ENCODE measurements at regions of chr18 and their contacts with region 1.

Region 1: GRCh38 chr18:58639751-58640427 is 11.0 kb upstream of the ALPK2 start:
- DNase-seq: no peak
- ATAC-seq: no peak
- H3K4me3 ChIP-seq: no peak overlapping the region
- H3K27ac ChIP-seq: peak overlapping the region in 1 of 4 donors; percentile 38
- H3K4me1 ChIP-seq: peaks cover 27 to 53% of the 10 kb centered on the region in 2 donors
- H3K27me3 ChIP-seq: no peaks in the 10 kb centered on the region
- CTCF ChIP-seq: no peak
- POLR2A ChIP-seq: no peak

Region 2: DNA sequence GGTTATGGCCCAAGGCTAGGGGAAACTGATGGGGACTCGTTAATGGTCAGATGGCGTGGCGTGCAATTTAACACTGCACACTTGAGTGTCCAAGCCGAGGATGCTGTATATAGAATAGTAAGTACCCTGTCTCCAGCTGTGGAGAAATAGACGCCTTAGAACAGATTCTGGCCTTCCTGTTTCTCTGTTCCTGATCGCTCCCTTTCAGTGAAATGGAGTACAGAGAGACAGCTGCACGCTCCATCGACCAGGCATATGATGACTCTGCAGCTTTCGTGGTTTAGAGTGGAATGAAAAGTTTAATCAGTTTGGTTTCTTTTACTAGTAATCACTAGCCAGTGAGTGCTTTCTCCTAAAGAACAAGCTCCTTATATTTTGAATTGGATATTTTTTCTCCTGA is 382.4 kb before region 1 on chr18:
- in situ Hi-C with region 1: no loop called
- intact Hi-C with region 1: loop called (anchors 10 kb)
- DNase-seq: peak; percentile 58 to 67
- ATAC-seq: peak; percentile 40 to 49
- H3K4me3 ChIP-seq: peak overlapping the region; percentile 62 to 76 (median 68)
- H3K27ac ChIP-seq: peak overlapping the region; percentile 91 to 97 (median 93)
- H3K4me1 ChIP-seq: peaks cover 32 to 42% of the 10 kb centered on the region in 2 donors
- H3K27me3 ChIP-seq: no peaks in the 10 kb centered on the region
- CTCF ChIP-seq: no peak
- POLR2A ChIP-seq: peak; percentile 39 to 76

Region 3: DNA sequence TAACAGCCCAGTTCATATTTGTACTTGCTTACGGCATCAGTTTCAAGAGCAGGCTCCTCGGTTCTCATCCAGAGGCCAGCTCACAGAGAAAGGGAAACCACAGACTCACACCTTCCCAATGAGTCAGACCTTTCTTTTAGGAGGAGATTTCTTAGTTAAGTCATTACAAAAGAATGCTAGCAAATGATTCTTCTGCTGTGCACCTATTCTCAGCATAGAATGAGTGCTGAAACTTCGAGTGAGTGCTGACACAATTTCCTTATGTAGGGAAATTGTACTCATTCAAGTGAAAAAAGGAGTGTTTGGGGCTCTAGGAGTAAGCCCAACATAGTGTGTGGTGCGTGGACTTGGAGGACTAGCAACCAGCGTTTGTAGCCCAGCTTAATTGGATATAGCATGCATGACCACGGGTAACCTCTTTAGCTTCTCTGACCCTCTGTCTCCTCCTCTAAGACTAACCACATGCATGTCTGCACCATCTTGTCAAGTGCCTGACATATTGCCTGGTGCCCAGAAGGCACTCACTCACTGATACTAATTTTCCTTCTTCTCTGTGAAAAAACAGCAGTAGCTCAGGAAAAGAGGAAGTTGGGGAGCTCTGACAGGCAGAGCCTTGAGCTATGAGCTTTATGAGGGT is 98.0 kb before region 1 on chr18:
- in situ Hi-C with region 1: no loop called
- intact Hi-C with region 1: loop called (anchors 5 kb)
- DNase-seq: peak; percentile 56 to 61
- ATAC-seq: peak; percentile 89 to 94
- H3K4me3 ChIP-seq: no peak overlapping the region
- H3K27ac ChIP-seq: peak overlapping the region; percentile 64 to 82 (median 77)
- H3K4me1 ChIP-seq: peaks cover 53 to 56% of the 10 kb centered on the region in 2 donors
- H3K27me3 ChIP-seq: no peaks in the 10 kb centered on the region
- CTCF ChIP-seq: no peak
- POLR2A ChIP-seq: no peak

Region 4: GRCh38 chr18:58649966-58650816 is 10.3 kb after region 1 on chr18:
- in situ Hi-C with region 1: no loop called
- intact Hi-C with region 1: no loop called
- DNase-seq: no peak
- ATAC-seq: no peak
- H3K4me3 ChIP-seq: no peak overlapping the region
- H3K27ac ChIP-seq: no peak overlapping the region
- H3K4me1 ChIP-seq: no peaks in the 10 kb centered on the region
- H3K27me3 ChIP-seq: no peaks in the 10 kb centered on the region
- CTCF ChIP-seq: no peak
- POLR2A ChIP-seq: no peak

Region 5: DNA sequence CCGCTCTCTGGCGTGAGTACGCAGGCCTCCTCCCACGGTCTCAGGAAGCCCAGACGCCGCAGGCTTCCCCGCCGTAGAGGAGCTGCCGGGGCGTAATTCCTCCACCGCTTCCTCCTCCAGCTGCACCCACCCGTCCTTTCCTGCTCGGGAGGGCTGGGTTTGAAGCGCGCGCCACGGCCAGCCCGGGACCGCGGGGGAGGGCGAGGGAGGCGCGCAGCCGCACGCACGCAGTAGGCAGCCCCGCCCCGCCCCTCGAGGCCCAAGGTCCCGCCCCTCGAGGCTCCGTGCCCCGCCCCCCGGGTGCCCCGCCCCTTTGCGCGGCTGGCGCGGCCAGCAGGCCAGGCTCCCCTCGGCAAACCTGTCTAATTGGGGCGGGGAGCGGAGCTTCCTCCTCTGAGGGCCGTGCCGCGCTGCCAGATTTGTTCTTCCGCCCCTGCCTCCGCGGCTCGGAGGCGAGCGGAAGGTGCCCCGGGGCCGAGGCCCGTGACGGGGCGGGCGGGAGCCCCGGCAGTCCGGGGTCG is 31.3 kb after region 1 on chr18 and contains the start of gene MALT1:
- in situ Hi-C with region 1: no loop called
- intact Hi-C with region 1: loop called (anchors 2 kb)
- DNase-seq: peak; percentile 88 to 89
- ATAC-seq: peak; percentile 92 to 95
- H3K4me3 ChIP-seq: peak within 1 kb of the TSS; percentile 58 to 68 (median 66)
- H3K27ac ChIP-seq: peak within 1 kb of the TSS; percentile 86 to 96 (median 94)
- H3K4me1 ChIP-seq: peaks cover 15 to 22% of the 10 kb centered on the region in 2 donors
- H3K27me3 ChIP-seq: no peaks in the 10 kb centered on the region
- CTCF ChIP-seq: no peak
- POLR2A ChIP-seq: peak; percentile 90 to 95
- total RNA-seq, gene MALT1: 9.9 to 24.8 (median 12.9) TPM

Region 6: GRCh38 chr18:58727776-58728500 is 88.0 kb after region 1 on chr18:
- in situ Hi-C with region 1: no loop called
- intact Hi-C with region 1: loop called (anchors 5 kb)
- DNase-seq: peak; percentile 58 to 65
- ATAC-seq: peak; percentile 42 to 48
- H3K4me3 ChIP-seq: no peak overlapping the region
- H3K27ac ChIP-seq: peak overlapping the region; percentile 52 to 85 (median 76)
- H3K4me1 ChIP-seq: peaks cover 38 to 63% of the 10 kb centered on the region in 2 donors
- H3K27me3 ChIP-seq: no peaks in the 10 kb centered on the region
- CTCF ChIP-seq: no peak
- POLR2A ChIP-seq: no peak

Region 7: GRCh38 chr18:58761241-58761969 is 121.5 kb after region 1 on chr18:
- in situ Hi-C with region 1: no loop called
- intact Hi-C with region 1: loop called (anchors 5 kb)
- DNase-seq: peak; percentile 61 to 63
- ATAC-seq: peak; percentile 82 to 89
- H3K4me3 ChIP-seq: no peak overlapping the region
- H3K27ac ChIP-seq: peak overlapping the region; percentile 63 to 83 (median 70)
- H3K4me1 ChIP-seq: peaks cover 14 to 19% of the 10 kb centered on the region in 2 donors
- H3K27me3 ChIP-seq: no peaks in the 10 kb centered on the region
- CTCF ChIP-seq: no peak
- POLR2A ChIP-seq: no peak